Cardiac septum (tissue), 1 donor: ENCODE measurements at regions of chr3 and their contacts with region 1.

Region 1: DNA sequence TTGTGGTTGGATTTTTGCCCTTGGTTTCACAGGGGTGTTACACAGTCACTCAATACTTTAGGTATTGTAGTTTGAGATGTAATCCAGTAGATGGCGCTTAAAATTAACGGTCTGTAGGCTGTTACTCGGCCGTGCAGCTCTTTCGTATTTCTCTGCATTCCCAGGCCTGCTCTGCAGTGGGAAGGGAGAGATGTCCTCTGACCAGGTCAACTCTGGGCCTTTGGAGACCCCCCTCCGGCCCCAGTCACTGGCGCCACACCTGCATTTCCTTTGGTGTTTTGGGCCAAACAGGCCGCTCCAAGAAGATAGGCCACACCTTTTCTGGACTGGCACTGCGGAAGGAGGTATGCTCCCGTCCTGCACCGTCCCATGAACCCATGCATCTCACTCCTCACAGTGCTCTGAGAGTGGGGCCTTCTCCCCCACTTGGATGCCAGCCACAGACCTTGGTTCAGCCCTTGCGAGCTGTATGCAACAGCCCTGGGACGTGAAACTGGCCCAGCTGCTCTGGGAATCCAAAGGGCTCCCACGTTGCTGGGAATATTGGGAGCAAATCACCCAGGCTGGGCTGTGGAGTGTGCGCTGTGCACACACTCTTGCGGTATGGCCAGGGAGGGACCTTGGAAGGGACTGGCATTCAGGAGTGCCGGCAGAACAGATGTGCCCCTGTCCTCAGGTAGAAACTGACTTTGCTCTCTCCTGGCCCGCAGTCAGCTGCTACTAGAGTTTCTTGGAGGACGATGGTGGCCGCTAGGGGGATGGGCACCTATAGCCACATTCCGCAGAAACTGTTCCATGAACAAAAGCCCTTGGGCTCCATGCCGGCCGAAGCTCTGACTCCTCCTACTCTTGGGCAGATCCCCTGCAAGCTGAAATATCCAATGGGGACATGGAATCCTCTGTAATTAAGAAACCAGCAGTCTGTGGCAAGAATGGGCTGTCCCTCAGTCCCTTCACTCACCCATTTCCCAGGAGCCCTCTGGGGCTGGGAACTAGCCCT is 410.5 kb upstream of the CADM2 start:
- DNase-seq: no peak

Region 2: GRCh38 chr3:84165278-84165677 is 383.0 kb before region 1 on chr3:
- intact Hi-C with region 1: no loop called
- DNase-seq: no peak

Region 3: GRCh38 chr3:85576091-85576690 is 1027.9 kb after region 1 on chr3:
- intact Hi-C with region 1: loop called (anchors 5 kb)
- DNase-seq: no peak